Naive thymus-derived CD4-positive, alpha-beta T cell (primary cell): ENCODE measurements at regions of chr6 and their contacts with region 1.

Region 1: GRCh38 chr6:42745707-42746462 is at the start of gene TBCC:
- DNase-seq: peak; percentile 73 to 97 (median 93)
- ATAC-seq: peak; percentile 88
- H3K4me3 ChIP-seq: peak within 1 kb of the TSS; percentile 95
- H3K4me3 Mint-ChIP-seq: peak within 1 kb of the TSS; percentile 91 to 100 (median 99)
- H3K27ac ChIP-seq: peak within 1 kb of the TSS; percentile 88
- H3K27ac Mint-ChIP-seq: peak within 1 kb of the TSS; percentile 97 to 100 (median 100)
- H3K4me1 ChIP-seq: peaks cover 19 to 29% of the 10 kb centered on the region in 2 donors
- H3K4me1 Mint-ChIP-seq: peaks cover 12 to 39% (median 27%) of the 10 kb centered on the region in 7 donors
- H3K27me3 ChIP-seq: no peaks in the 10 kb centered on the region
- H3K27me3 Mint-ChIP-seq: no peaks in the 10 kb centered on the region
- total RNA-seq, gene TBCC: 39.6 to 74.8 (median 71.4) TPM

Region 2: DNA sequence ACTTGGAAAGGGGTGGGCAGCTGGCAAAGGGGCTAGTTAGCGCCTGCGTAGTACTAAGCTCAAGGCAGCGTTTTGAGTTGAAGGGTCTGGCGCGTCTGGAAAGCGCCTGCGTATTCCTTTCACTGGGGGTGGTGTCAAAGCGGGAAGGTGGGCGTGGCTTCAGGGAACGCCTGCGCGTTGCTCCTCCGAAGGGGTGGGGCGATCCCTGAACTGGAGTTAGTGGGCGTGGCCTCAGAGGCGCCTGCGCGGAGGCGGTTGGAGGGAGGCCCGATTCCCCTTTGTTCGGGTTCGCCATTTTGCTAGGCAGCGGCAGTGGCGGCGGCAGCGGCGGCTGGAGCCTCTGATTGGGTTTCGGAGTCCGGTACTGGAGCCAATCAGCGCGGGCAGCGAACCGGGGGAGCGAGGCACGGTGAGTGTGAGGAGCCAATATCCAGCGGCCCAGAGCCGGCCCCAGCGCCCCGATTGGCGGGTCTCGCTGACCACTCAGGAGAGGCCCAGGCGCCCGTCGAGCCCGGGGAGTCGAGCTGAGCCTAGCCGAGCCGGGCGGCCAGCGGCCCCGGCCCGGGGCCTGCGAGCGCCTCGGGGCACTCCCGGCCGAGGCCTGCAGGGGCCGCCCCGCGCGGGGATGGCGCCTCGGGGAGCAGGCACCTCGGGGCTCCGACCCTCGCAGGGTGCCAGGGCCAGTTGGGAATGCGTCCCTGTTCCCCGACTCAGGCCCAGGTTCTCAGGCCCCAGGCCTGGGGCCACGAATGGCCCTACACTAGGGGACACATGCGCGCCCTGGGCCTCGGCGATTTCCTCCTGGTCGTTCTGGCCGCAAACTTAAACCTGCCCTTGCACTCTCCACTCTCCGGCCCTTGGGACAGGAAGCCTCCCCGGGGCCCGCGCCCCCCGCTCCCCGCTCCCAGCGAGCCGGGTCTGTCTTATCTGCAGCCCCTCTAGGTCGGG is 1672.9 kb before region 1 on chr6 and contains the start of gene NFYA:
- CTCF ChIA-PET with region 1: no interaction called
- POLR2A ChIA-PET with region 1: no interaction called
- intact Hi-C with region 1: loop called (anchors 5 to 10 kb)
- DNase-seq: peak; percentile 99 to 100 (median 100)
- ATAC-seq: peak; percentile 80
- H3K4me3 ChIP-seq: peak within 1 kb of the TSS; percentile 78
- H3K4me3 Mint-ChIP-seq: peak within 1 kb of the TSS; percentile 90 to 98 (median 96)
- H3K27ac ChIP-seq: peak within 1 kb of the TSS; percentile 95
- H3K27ac Mint-ChIP-seq: peak within 1 kb of the TSS; percentile 95 to 99 (median 97)
- H3K4me1 ChIP-seq: peaks cover 30% of the 10 kb centered on the region in 2 donors
- H3K4me1 Mint-ChIP-seq: peaks cover 39 to 66% (median 59%) of the 10 kb centered on the region in 7 donors
- H3K27me3 ChIP-seq: no peaks in the 10 kb centered on the region
- H3K27me3 Mint-ChIP-seq: peaks cover 0 to 5% (median 0%) of the 10 kb centered on the region in 5 donors
- total RNA-seq, gene NFYA: 31.6 to 63.3 (median 35.9) TPM

Region 3: DNA sequence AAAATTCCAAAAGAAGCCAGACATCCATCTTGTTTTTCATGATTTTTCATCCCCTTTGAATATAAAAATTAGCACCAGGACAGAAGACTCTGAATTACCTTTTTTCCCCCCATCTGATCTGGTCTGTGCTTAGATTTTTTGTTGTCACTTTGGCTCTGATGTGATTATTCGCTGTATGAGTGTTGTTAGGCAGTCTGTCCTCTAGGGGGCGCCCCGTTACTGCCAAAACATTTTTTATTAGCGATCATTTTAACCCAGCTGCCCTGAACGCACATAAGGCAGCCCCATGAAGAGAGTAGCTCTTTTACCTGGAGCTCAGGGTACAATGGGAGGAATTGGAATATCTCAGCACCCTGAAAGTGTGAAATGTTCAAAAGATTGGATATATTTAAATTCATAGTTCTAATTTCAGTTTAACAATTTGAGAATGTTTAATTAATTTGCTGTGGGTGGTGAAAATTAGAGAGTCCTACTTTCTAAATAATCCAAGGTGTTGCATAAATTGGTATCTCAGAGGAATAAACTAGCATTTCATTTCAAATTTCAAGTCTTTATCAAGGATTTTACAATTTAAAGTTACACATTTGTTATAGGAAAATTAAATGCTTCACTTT is 84.2 kb before region 1 on chr6:
- CTCF ChIA-PET with region 1: interaction called, 3 read pairs
- POLR2A ChIA-PET with region 1: interaction called, 20 read pairs
- intact Hi-C with region 1: loop called in 1 of 2 experiments (anchors 1 kb)
- DNase-seq: peak; percentile 73 to 89 (median 81)
- ATAC-seq: peak; percentile 99
- H3K4me3 ChIP-seq: no peak overlapping the region
- H3K4me3 Mint-ChIP-seq: no peak overlapping the region
- H3K27ac ChIP-seq: no peak overlapping the region
- H3K27ac Mint-ChIP-seq: peak overlapping the region in 8 of 9 donors; percentile 0 to 59 (median 26)
- H3K4me1 ChIP-seq: no peaks in the 10 kb centered on the region
- H3K4me1 Mint-ChIP-seq: peaks cover 0 to 6% (median 0%) of the 10 kb centered on the region in 7 donors
- H3K27me3 ChIP-seq: no peaks in the 10 kb centered on the region
- H3K27me3 Mint-ChIP-seq: no peaks in the 10 kb centered on the region

Region 4: DNA sequence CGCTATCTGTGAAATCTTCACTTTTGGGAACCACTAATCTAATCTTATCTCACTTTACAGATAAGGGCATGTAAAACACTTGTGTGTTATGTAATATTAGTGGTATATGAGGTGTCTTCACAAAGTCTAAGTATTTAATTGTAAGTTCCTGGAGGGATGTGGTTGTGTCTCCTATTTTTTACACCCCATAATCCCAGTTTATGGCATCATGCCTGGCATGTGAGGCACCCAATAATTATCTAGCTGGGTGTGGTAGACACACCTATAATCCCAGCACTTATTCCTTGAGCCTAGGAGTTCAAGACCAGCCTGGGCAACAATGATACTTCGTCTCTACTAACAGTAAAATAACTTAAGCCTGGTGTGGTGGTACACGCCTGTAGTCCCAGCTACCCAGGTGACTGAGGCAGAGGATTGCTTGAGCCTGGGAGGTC is 16.6 kb after region 1 on chr6:
- CTCF ChIA-PET with region 1: no interaction called
- POLR2A ChIA-PET with region 1: interaction called, 1,628 read pairs
- intact Hi-C with region 1: no loop called
- DNase-seq: no peak
- ATAC-seq: no peak
- H3K4me3 ChIP-seq: no peak overlapping the region
- H3K4me3 Mint-ChIP-seq: no peak overlapping the region
- H3K27ac ChIP-seq: no peak overlapping the region
- H3K27ac Mint-ChIP-seq: peak overlapping the region in 1 of 9 donors; percentile 15
- H3K4me1 ChIP-seq: no peaks in the 10 kb centered on the region
- H3K4me1 Mint-ChIP-seq: peaks cover 13 to 39% (median 36%) of the 10 kb centered on the region in 7 donors
- H3K27me3 ChIP-seq: no peaks in the 10 kb centered on the region
- H3K27me3 Mint-ChIP-seq: no peaks in the 10 kb centered on the region

Region 5: DNA sequence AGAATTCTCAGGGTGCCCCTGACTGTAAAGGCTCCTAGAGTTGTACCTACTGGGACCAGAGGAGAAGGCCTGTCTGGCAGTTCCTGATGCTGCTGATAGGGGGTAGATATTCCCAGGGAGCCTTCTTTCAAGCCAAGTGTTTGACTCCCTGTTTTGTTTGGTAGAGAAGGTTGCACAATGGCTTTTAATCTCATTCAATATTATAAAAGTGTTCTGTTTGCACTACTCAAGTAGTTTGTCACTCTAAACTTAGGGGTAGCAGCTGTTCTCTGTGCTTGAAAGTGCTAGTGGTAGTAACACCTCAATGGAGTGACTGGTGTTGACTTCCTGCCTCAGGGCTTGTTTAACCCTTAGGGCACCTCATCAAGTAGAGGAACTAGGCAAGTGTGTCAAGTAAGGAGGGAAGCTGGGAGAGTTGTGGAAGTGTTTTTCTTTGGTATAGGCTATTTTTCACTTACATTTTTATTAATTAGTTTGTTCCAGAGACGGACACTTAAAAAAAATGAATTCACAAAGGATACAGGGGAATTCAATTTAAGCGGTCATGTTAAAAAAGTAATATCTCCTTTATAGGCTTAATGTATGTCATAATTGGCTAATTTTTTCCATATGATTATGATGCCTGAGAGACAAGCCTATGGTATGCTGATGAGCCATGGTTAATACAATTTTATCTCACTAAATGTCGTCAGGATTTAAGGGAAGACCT is 74.1 kb after region 1 on chr6:
- CTCF ChIA-PET with region 1: no interaction called
- POLR2A ChIA-PET with region 1: interaction called, 20 read pairs
- intact Hi-C with region 1: no loop called
- DNase-seq: peak in 7 of 9 donors; percentile 15 to 51 (median 42)
- ATAC-seq: peak; percentile 76
- H3K4me3 ChIP-seq: no peak overlapping the region
- H3K4me3 Mint-ChIP-seq: peak overlapping the region in 6 of 10 donors; percentile 6 to 55 (median 36)
- H3K27ac ChIP-seq: no peak overlapping the region
- H3K27ac Mint-ChIP-seq: peak overlapping the region; percentile 23 to 90 (median 73)
- H3K4me1 ChIP-seq: peaks cover 0 to 6% of the 10 kb centered on the region in 2 donors
- H3K4me1 Mint-ChIP-seq: peaks cover 10 to 43% (median 30%) of the 10 kb centered on the region in 7 donors
- H3K27me3 ChIP-seq: no peaks in the 10 kb centered on the region
- H3K27me3 Mint-ChIP-seq: no peaks in the 10 kb centered on the region

Region 6: DNA sequence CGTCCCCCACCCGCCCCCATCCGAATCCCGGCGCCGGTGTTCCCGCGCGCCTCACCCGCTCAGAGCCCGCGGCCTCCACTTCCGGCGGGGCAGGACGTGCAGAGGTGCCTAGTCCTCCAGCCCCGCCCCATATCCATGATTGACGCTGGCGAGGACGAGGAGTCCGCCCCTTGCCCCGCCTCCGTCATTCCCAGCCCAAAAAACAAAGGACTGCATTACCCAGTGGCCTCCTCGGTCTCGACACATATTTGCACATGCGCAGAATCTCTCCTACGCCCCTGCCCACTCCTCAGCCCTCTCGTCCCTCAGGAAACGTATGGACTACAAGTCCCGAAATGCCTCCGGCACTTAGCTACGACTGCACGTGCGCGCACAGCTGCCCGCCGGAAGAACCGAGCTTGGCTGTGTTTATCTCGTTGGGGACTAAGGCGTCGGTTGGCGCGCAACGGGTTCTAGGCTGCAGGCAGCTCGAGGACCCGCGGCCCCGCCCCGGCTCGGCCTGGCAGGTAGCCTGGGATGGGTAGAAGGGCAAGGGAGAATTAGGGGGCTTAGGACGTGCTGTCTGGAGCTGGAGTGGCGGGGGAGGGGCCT is 268.1 kb after region 1 on chr6 and contains the starts of genes KLHDC3 and MEA1:
- CTCF ChIA-PET with region 1: no interaction called
- POLR2A ChIA-PET with region 1: interaction called, 3 read pairs
- intact Hi-C with region 1: loop called (anchors 1 to 2 kb)
- DNase-seq: peak; percentile 83 to 100 (median 99)
- ATAC-seq: peak; percentile 98
- H3K4me3 ChIP-seq: peak within 1 kb of the TSS; percentile 73
- H3K4me3 Mint-ChIP-seq: peak within 1 kb of the TSS; percentile 85 to 99 (median 92)
- H3K27ac ChIP-seq: peak within 1 kb of the TSS; percentile 84
- H3K27ac Mint-ChIP-seq: peak within 1 kb of the TSS; percentile 82 to 97 (median 92)
- H3K4me1 ChIP-seq: peaks cover 20 to 31% of the 10 kb centered on the region in 2 donors
- H3K4me1 Mint-ChIP-seq: peaks cover 45 to 78% (median 58%) of the 10 kb centered on the region in 7 donors
- H3K27me3 ChIP-seq: no peaks in the 10 kb centered on the region
- H3K27me3 Mint-ChIP-seq: peaks cover 0 to 3% (median 0%) of the 10 kb centered on the region in 5 donors
- total RNA-seq, gene KLHDC3: 39.9 to 76.9 (median 67.4) TPM
- total RNA-seq, gene MEA1: 20.3 to 58.0 (median 32.7) TPM